MCF 10A (cell line): ENCODE measurements at regions of chr3 and their contacts with region 1.

Region 1: DNA sequence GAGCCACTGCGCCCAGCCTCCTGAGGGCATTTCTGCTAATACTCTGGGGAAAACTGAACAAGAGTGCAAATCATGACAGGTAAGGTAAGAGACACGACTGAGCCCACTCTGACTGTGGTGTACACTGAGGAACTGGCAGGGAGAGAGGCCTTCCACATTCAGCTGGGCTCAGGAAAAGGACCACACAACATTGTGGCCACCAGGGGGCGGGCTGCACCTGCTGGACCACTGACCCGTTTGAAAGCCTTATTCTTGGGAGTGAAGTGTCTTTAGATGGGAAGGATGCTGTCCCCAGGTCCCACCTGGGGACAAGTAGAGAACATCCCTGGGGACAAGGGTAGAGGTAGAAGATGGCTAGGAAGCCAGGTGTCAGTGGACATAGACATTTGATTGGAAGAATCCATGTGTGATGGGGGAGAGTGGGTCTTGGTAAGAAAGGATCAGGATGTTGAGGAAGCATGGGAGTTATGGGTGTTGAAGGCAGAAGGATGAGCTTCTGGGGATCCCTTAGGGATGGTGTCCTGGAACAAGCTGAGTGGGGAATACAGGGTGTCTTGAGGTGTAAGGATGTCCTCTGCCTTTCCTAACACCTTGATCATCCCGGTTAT is 6.2 kb upstream of the CTDSPL start:
- DNase-seq: peak; percentile 79
- H3K4me3 Mint-ChIP-seq: no peak overlapping the region
- H3K27ac Mint-ChIP-seq: no peak overlapping the region
- H3K4me1 Mint-ChIP-seq: peaks cover 29% of the 10 kb centered on the region
- H3K27me3 Mint-ChIP-seq: no peaks in the 10 kb centered on the region
- CTCF ChIP-seq: peak; percentile 94

Region 2: DNA sequence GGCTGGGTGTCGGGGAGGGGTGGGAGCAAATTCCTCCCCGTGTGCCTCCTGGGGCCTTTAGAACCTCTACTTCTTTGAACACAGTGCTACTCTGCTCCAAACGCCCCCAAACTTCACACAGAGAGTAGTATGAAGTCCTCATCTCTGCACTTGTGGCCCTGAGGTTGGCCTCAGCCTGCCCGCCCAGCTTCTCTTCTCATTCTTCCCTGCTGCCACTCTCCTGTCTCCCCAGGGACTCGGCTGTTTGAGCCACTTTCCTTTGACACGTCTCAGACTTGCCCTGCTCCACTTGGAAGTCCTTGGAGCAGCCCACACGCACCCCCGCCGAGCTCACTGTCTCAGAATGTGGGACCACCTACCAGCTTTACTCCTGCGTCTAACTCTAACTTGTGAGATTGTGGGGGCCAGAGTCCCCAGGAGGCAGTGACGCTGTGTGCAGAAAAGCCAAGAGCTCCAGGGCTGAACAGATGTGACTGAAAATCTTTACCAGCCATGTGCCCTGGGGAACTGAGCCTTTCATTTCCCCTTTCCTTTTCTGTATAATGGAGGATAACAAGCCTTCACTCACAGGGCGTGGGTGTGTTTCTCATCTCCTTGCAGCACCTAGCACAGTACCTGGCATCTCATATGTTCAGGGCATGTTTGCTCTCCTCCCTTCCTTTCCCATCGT is 227.4 kb before region 1 on chr3:
- CTCF ChIA-PET with region 1: no interaction called
- POLR2A ChIA-PET with region 1: no interaction called
- intact Hi-C with region 1: no loop called
- DNase-seq: no peak
- H3K4me3 Mint-ChIP-seq: no peak overlapping the region
- H3K27ac Mint-ChIP-seq: no peak overlapping the region
- H3K4me1 Mint-ChIP-seq: no peaks in the 10 kb centered on the region
- H3K27me3 Mint-ChIP-seq: peaks cover 28% of the 10 kb centered on the region
- CTCF ChIP-seq: no peak

Region 3: GRCh38 chr3:37825744-37826390 is 29.6 kb before region 1 on chr3:
- CTCF ChIA-PET with region 1: no interaction called
- POLR2A ChIA-PET with region 1: no interaction called
- intact Hi-C with region 1: no loop called
- DNase-seq: no peak
- H3K4me3 Mint-ChIP-seq: no peak overlapping the region
- H3K27ac Mint-ChIP-seq: no peak overlapping the region
- H3K4me1 Mint-ChIP-seq: no peaks in the 10 kb centered on the region
- H3K27me3 Mint-ChIP-seq: no peaks in the 10 kb centered on the region
- CTCF ChIP-seq: no peak

Region 4: GRCh38 chr3:37945807-37946530 is 90.5 kb after region 1 on chr3:
- CTCF ChIA-PET with region 1: interaction called, 25 read pairs
- POLR2A ChIA-PET with region 1: interaction called, 3 read pairs
- intact Hi-C with region 1: no loop called
- DNase-seq: peak; percentile 88
- H3K4me3 Mint-ChIP-seq: peak overlapping the region; percentile 65
- H3K27ac Mint-ChIP-seq: peak overlapping the region; percentile 90
- H3K4me1 Mint-ChIP-seq: peaks cover 42% of the 10 kb centered on the region
- H3K27me3 Mint-ChIP-seq: no peaks in the 10 kb centered on the region
- CTCF ChIP-seq: no peak

Region 5: GRCh38 chr3:37967260-37967881 is 111.9 kb after region 1 on chr3:
- CTCF ChIA-PET with region 1: interaction called, 207 read pairs
- POLR2A ChIA-PET with region 1: interaction called, 15 read pairs
- intact Hi-C with region 1: loop called (anchors 1 kb)
- DNase-seq: peak; percentile 71
- H3K4me3 Mint-ChIP-seq: no peak overlapping the region
- H3K27ac Mint-ChIP-seq: peak overlapping the region; percentile 57
- H3K4me1 Mint-ChIP-seq: peaks cover 10% of the 10 kb centered on the region
- H3K27me3 Mint-ChIP-seq: no peaks in the 10 kb centered on the region
- CTCF ChIP-seq: peak; percentile 74

Region 6: DNA sequence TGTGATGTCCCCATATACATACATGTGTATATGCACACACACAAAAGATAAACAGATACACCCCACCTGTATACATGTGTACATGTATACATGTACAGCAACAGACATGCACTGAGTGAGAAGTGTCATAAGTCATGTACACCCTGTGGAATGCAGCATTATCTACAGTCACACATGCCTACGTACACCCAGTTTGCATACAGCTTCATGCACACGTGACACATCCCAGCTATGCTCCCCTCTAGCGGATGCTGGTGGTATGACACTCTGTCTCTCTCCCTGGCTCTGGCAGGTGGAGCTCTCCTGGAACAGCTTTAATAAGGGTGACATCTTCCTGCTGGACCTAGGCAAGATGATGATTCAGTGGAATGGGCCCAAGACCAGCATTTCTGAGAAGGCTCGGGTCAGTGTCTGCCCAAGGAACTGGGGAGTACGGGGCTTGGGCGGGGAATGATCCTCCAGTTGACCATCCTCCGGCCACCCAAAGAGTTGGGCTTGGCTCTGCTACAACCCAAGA is 141.4 kb after region 1 on chr3:
- CTCF ChIA-PET with region 1: interaction called, 45 read pairs
- POLR2A ChIA-PET with region 1: interaction called, 7 read pairs
- intact Hi-C with region 1: no loop called
- DNase-seq: peak; percentile 85
- H3K4me3 Mint-ChIP-seq: no peak overlapping the region
- H3K27ac Mint-ChIP-seq: peak overlapping the region; percentile 22
- H3K4me1 Mint-ChIP-seq: peaks cover 29% of the 10 kb centered on the region
- H3K27me3 Mint-ChIP-seq: no peaks in the 10 kb centered on the region
- CTCF ChIP-seq: peak; percentile 82

Region 7: DNA sequence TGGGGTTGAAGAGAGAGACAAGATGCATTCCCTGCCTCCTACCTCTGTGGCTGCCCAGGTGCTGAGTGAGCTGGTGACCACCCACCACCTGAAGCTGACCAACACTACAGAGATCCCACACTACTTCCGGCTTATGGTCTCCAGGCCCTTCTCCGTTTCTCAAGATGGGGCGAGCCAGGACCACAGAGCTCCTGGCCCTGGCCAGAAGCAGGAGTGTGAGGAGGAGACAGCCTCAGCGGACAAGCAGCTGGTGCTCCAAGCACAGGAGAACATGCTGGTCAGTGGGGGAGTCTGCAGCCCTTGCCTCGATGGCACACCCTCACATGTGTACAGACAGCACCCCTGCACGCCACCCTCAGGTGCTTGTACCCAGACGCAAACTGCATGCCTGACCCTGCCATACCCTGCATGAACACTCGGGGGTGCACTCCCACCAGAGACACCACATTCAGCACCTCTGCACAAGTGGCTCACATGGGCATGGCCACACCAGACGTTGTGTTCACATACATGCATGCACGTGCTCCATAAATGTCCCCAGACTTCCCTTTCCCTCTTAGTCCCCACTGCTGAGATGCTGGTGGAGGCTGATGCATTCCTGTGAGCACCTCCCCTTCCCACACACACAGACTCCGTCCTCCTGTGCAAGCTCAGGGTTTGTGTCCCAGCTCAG is 262.4 kb after region 1 on chr3:
- CTCF ChIA-PET with region 1: interaction called, 14 read pairs
- POLR2A ChIA-PET with region 1: no interaction called
- intact Hi-C with region 1: no loop called
- DNase-seq: peak; percentile 65
- H3K4me3 Mint-ChIP-seq: no peak overlapping the region
- H3K27ac Mint-ChIP-seq: no peak overlapping the region
- H3K4me1 Mint-ChIP-seq: no peaks in the 10 kb centered on the region
- H3K27me3 Mint-ChIP-seq: peaks cover 12% of the 10 kb centered on the region
- CTCF ChIP-seq: peak; percentile 70